ENCODE measurements at regions of chr11 and their contacts with region 1.

Region 1: GRCh38 chr11:87352759-87353707 is 315.3 kb downstream of the TMEM135 start:
- DNase-seq: peak; percentile 87 to 96
- H3K4me3 ChIP-seq: no peak overlapping the region
- H3K4me3 Mint-ChIP-seq: no peak overlapping the region
- H3K27ac Mint-ChIP-seq: no peak overlapping the region
- H3K4me1 ChIP-seq: peaks cover 11% of the 10 kb centered on the region
- H3K4me1 Mint-ChIP-seq: peaks cover 2% of the 10 kb centered on the region
- H3K27me3 ChIP-seq: no peaks in the 10 kb centered on the region
- H3K27me3 Mint-ChIP-seq: no peaks in the 10 kb centered on the region
- CTCF ChIP-seq: peak; percentile 99 to 100

Region 2: GRCh38 chr11:86938900-86939880 is 413.8 kb before region 1 on chr11:
- CTCF ChIA-PET with region 1: interaction called, 3 read pairs
- POLR2A ChIA-PET with region 1: no interaction called
- intact Hi-C with region 1: loop called (anchors 2 kb)
- DNase-seq: peak in 1 of 2 experiments; percentile 75
- H3K4me3 ChIP-seq: no peak overlapping the region
- H3K4me3 Mint-ChIP-seq: peak overlapping the region; percentile 60
- H3K27ac Mint-ChIP-seq: peak overlapping the region; percentile 84
- H3K4me1 ChIP-seq: peaks cover 51% of the 10 kb centered on the region
- H3K4me1 Mint-ChIP-seq: peaks cover 52% of the 10 kb centered on the region
- H3K27me3 ChIP-seq: no peaks in the 10 kb centered on the region
- H3K27me3 Mint-ChIP-seq: no peaks in the 10 kb centered on the region
- CTCF ChIP-seq: peak; percentile 79 to 83

Region 3: GRCh38 chr11:87421422-87421821 is 68.4 kb after region 1 on chr11:
- CTCF ChIA-PET with region 1: interaction called, 31 read pairs
- POLR2A ChIA-PET with region 1: no interaction called
- intact Hi-C with region 1: loop called (anchors 1 kb)
- DNase-seq: peak; percentile 73 to 81
- H3K4me3 ChIP-seq: no peak overlapping the region
- H3K4me3 Mint-ChIP-seq: no peak overlapping the region
- H3K27ac Mint-ChIP-seq: no peak overlapping the region
- H3K4me1 ChIP-seq: no peaks in the 10 kb centered on the region
- H3K4me1 Mint-ChIP-seq: no peaks in the 10 kb centered on the region
- H3K27me3 ChIP-seq: no peaks in the 10 kb centered on the region
- H3K27me3 Mint-ChIP-seq: no peaks in the 10 kb centered on the region
- CTCF ChIP-seq: peak; percentile 85 to 91

Region 4: DNA sequence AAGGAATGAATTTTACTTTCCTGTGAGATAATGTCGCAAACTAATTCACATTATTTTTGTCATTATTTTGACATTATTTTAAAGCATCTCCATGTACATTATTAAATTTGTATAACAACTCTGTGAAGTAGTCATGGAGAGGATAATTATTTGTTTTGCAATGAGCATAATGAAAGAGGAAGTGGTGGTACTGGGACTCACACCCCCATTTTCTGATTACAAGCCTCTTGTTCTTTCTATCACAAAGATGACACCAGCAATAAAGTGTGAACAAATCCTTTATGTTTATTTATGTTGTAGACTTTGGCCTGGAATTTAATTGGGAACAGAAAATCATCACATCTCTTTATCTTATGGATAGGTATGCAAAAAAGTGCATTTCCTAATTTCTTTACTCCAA is 207.3 kb after region 1 on chr11:
- CTCF ChIA-PET with region 1: no interaction called
- POLR2A ChIA-PET with region 1: no interaction called
- intact Hi-C with region 1: loop called (anchors 5 kb)
- DNase-seq: no peak
- H3K4me3 ChIP-seq: no peak overlapping the region
- H3K4me3 Mint-ChIP-seq: no peak overlapping the region
- H3K27ac Mint-ChIP-seq: no peak overlapping the region
- H3K4me1 ChIP-seq: no peaks in the 10 kb centered on the region
- H3K4me1 Mint-ChIP-seq: no peaks in the 10 kb centered on the region
- H3K27me3 ChIP-seq: no peaks in the 10 kb centered on the region
- H3K27me3 Mint-ChIP-seq: peaks cover 13% of the 10 kb centered on the region
- CTCF ChIP-seq: no peak

Region 5: GRCh38 chr11:87722756-87723565 is 369.9 kb after region 1 on chr11:
- CTCF ChIA-PET with region 1: no interaction called
- POLR2A ChIA-PET with region 1: no interaction called
- intact Hi-C with region 1: loop called (anchors 2 kb)
- DNase-seq: peak; percentile 54 to 65
- H3K4me3 ChIP-seq: no peak overlapping the region
- H3K4me3 Mint-ChIP-seq: no peak overlapping the region
- H3K27ac Mint-ChIP-seq: no peak overlapping the region
- H3K4me1 ChIP-seq: peaks cover 7% of the 10 kb centered on the region
- H3K4me1 Mint-ChIP-seq: peaks cover 7% of the 10 kb centered on the region
- H3K27me3 ChIP-seq: no peaks in the 10 kb centered on the region
- H3K27me3 Mint-ChIP-seq: peaks cover 3% of the 10 kb centered on the region
- CTCF ChIP-seq: peak; percentile 96

Region 6: DNA sequence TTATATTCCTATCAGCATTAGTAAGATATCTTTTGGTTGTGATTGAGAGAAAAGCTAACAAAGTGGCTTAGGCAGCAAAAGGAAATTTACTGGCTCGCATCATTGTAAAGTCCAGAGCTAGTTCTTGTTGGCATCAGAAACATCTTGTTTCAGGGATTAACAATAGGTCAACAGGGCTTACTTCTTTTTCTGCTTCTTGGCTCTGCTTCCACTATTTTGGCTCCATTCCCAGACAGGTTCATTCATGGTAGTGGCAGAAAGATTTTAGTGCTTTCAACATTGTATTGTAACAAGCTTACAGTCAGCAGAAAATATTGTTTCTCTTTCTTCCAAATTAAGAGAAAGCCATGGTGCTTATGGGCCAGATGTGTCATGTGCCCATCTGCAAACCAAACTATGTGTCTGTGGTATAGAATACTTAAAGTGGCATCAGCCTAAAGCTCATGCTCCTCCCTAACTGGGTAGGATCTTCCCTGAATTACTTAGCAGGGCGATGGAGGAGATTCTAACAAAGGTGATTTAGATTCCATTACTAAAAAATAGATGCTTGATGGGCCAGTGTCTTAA is 506.6 kb after region 1 on chr11:
- CTCF ChIA-PET with region 1: no interaction called
- POLR2A ChIA-PET with region 1: no interaction called
- intact Hi-C with region 1: loop called (anchors 10 kb)
- DNase-seq: no peak
- H3K4me3 ChIP-seq: no peak overlapping the region
- H3K4me3 Mint-ChIP-seq: no peak overlapping the region
- H3K27ac Mint-ChIP-seq: no peak overlapping the region
- H3K4me1 ChIP-seq: no peaks in the 10 kb centered on the region
- H3K4me1 Mint-ChIP-seq: no peaks in the 10 kb centered on the region
- H3K27me3 ChIP-seq: no peaks in the 10 kb centered on the region
- H3K27me3 Mint-ChIP-seq: no peaks in the 10 kb centered on the region
- CTCF ChIP-seq: no peak

Region 7: GRCh38 chr11:88886796-88887195 is 1533.8 kb after region 1 on chr11:
- CTCF ChIA-PET with region 1: no interaction called
- POLR2A ChIA-PET with region 1: no interaction called
- intact Hi-C with region 1: loop called (anchors 5 kb)
- DNase-seq: peak; percentile 57 to 72
- H3K4me3 ChIP-seq: no peak overlapping the region
- H3K4me3 Mint-ChIP-seq: no peak overlapping the region
- H3K27ac Mint-ChIP-seq: no peak overlapping the region
- H3K4me1 ChIP-seq: no peaks in the 10 kb centered on the region
- H3K4me1 Mint-ChIP-seq: no peaks in the 10 kb centered on the region
- H3K27me3 ChIP-seq: no peaks in the 10 kb centered on the region
- H3K27me3 Mint-ChIP-seq: peaks cover 2% of the 10 kb centered on the region
- CTCF ChIP-seq: peak; percentile 49 to 57